ENCODE measurements at regions of chr3 and their contacts with region 1.

Region 1: DNA sequence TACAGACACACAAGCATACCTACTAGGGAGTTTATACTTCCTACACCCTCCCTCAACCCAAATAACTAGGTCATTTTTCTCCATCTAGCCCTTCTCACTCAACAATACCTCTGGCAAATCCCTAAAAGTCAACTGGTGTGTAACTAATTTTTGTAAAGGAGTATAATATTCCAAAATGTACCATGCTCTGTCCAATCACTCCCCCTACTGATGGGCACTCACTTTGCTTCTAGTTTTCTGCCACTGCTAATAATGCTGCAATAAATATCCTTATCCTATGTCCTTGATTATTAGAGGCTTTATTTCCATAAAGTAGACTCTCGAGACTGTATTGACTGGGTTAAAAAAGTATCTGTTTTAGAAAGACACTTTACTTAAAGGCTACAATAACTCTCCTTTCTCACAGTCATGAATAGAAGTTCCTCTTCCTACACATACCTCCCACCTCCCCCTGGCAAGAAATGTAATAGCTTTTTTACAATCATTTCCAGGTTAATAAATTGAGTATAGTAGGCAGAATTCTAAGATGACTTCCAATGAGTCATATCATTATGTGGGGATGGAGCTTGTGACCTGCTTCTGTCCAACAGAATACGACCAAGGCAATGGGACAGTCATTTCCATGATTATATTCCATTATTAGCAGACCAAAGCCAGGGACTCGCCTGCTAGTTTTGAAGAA is 30.0 kb downstream of the SHQ1 start:
- DNase-seq: no peak
- H3K4me3 ChIP-seq: no peak overlapping the region
- H3K27me3 ChIP-seq: no peaks in the 10 kb centered on the region
- CTCF ChIP-seq: peak; percentile 71

Region 2: DNA sequence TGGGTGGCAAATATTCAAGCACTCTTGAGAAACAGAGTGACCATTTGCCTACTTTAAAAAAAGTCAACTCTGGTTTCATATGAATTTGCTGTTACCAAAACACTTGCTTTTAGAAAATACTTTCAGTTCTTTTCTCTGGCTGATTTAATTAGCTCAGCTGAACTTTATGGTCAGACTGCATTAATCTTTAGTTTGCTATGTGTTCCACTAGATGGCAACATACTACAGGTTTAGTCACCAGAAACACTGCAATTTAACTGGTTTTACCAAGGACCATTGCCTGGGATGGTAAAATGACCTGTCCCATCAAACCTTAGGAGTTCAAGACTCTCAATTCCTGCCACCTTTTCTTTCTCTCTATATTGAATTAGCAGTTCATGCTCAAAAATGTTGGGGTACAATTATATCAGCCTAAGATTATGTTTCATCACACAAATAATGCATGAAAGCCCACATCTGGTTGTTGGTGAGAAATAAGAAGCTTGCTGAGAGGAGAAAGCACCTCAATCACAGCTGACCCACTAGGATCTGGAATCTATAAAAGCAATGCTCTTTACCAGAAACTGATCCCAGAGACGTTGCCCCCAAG is 1107.2 kb before region 1 on chr3:
- CTCF ChIA-PET with region 1: interaction called, 10 read pairs
- POLR2A ChIA-PET with region 1: no interaction called
- DNase-seq: no peak
- H3K4me3 ChIP-seq: no peak overlapping the region
- H3K27me3 ChIP-seq: peaks cover 6% of the 10 kb centered on the region
- CTCF ChIP-seq: peak; percentile 64

Region 3: GRCh38 chr3:71725279-71725991 is 1092.8 kb before region 1 on chr3 and contains the start of gene EIF4E3:
- CTCF ChIA-PET with region 1: interaction called, 16 read pairs
- POLR2A ChIA-PET with region 1: no interaction called
- DNase-seq: no peak
- H3K4me3 ChIP-seq: peak within 1 kb of the TSS; percentile 57
- H3K27me3 ChIP-seq: peaks cover 12% of the 10 kb centered on the region
- CTCF ChIP-seq: no peak
- polyA plus RNA-seq, gene EIF4E3: 1.1 and 2.8 TPM in 2 replicates

Region 4: DNA sequence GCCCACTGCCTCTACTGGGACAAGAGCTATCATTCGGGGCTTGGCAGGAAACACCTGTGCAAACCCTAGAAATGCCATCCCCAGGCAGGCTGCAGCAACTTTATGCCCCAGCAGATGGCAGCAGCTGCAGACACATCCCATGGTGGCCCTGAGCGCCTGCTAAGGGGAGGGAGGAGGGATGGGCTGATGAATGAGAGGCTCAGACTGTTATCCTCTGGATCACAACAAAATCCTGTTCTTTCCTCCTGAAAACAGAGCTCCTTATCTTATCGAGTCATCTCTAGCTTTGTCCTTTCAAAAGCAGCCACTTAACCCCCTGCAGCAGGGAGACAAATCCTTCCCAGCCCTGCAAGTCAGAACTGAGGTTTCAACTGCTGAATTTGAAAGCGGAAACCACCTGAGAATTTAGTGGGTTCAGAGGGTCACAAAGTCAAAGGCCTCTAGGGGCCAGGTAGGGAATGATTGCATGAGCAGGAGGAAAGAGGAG is 942.7 kb before region 1 on chr3:
- CTCF ChIA-PET with region 1: interaction called, 74 read pairs
- POLR2A ChIA-PET with region 1: no interaction called
- DNase-seq: no peak
- H3K4me3 ChIP-seq: no peak overlapping the region
- H3K27me3 ChIP-seq: no peaks in the 10 kb centered on the region; the same call in 1 of the 2 replicates
- CTCF ChIP-seq: peak; percentile 92

Region 5: GRCh38 chr3:71955240-71956068 is 862.8 kb before region 1 on chr3:
- CTCF ChIA-PET with region 1: interaction called, 16 read pairs
- POLR2A ChIA-PET with region 1: no interaction called
- DNase-seq: peak; percentile 25
- H3K4me3 ChIP-seq: no peak overlapping the region
- H3K27me3 ChIP-seq: peaks cover 3% of the 10 kb centered on the region
- CTCF ChIP-seq: peak; percentile 84

Region 6: DNA sequence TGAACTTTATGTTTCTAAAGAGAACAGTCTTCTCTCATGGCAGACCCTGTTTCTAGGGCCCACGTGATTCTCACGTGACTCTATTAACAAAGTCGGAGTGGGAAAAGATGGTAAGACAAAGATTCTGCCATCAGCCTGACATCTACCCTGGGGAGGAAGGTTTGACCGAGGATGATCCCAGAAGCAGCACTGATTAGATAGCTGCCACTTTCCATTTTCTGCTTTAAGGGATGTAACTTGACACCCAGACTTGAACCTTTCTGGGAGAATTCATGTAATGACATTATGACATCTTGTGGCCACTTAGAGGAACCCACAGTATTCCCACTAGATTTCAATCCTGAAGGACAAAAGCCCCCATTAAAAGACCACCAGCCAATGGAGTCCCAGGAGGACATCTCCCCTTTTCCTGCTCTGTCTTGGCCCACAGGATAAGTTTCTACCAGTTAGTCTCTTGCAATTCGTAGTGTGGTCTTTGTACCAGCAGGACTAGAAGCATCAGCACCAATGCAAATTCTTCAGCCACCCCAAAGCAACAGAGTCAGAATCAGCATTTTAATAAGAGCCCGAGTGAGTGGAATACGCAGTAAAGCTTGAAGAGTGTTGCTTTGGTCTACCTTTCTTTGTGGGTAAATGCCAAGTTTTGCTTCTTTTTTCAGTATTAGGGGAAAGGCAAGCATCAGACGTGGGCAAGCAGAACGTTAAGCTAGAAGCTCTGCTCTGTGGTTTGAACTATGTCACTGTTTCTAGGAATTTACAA is 552.8 kb before region 1 on chr3:
- CTCF ChIA-PET with region 1: interaction called, 10 read pairs
- POLR2A ChIA-PET with region 1: no interaction called
- DNase-seq: no peak
- H3K4me3 ChIP-seq: no peak overlapping the region
- H3K27me3 ChIP-seq: peaks cover 7% of the 10 kb centered on the region
- CTCF ChIP-seq: peak; percentile 38

Region 7: DNA sequence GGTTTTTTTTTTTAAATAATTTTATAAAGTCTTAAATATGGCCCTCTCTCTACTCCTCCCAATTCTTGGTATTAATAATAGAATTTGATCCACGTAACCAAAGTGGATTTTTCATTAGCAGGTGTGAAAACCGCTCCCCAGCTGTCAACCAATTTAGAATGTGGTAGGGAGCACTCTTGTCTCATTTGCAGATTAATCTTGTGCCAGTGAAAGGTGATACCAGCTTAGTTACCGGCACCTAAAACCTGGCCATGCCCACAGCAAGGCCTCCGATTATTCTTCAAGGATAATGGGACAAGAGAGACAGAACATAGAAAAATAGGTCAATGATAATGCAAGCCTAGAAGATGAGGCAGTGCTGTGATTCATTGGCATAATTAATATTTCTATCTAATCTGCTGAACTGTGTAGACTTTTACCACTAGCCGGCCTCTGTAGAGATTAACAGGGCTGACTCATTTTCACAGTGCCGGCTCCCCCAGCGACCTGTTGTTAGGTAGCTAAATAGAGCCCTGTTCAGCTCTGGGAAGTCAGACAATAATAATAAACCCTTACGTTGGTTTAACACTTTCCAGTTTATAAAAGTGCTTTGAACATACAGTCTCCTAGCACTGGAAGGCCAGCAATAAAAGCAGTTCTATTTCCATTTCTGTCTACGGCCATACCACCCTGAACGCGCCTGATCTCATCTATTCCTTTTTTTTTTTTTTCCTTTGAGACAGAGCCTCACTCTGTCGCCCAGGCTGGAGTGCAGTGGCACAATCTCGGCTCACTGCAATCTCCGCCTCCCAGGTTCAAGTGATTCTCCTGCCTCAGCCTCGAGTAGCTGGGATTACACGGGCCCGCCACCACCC is 72.9 kb before region 1 on chr3:
- CTCF ChIA-PET with region 1: no interaction called
- POLR2A ChIA-PET with region 1: no interaction called
- DNase-seq: no peak
- H3K4me3 ChIP-seq: no peak overlapping the region
- H3K27me3 ChIP-seq: no peaks in the 10 kb centered on the region
- CTCF ChIP-seq: no peak

Region 8: DNA sequence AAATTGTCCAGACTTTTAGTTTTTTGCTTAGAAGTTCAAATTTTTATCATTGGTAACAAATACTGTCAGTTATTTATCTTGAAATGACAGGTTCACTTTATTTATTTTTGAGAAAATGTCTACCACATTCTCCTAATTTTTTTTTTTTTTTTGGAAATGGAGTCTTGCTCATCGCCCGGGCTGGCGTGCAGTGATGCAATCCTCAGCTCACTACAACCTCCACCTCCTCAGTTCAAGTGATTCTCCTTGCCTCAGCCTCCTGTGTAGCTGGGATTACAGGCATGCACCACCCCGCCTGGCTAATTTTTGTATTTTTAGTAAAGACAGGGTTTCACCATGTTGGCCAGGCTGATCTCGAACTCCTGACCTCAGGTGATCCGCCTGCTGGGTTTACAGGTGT is 227.2 kb after region 1 on chr3:
- CTCF ChIA-PET with region 1: no interaction called
- POLR2A ChIA-PET with region 1: no interaction called
- DNase-seq: no peak
- H3K4me3 ChIP-seq: no peak overlapping the region
- H3K27me3 ChIP-seq: no peaks in the 10 kb centered on the region
- CTCF ChIP-seq: no peak

Measured in BJ (cell line).